ENCODE measurements at regions of chr9 and their contacts with region 1.

Region 1: DNA sequence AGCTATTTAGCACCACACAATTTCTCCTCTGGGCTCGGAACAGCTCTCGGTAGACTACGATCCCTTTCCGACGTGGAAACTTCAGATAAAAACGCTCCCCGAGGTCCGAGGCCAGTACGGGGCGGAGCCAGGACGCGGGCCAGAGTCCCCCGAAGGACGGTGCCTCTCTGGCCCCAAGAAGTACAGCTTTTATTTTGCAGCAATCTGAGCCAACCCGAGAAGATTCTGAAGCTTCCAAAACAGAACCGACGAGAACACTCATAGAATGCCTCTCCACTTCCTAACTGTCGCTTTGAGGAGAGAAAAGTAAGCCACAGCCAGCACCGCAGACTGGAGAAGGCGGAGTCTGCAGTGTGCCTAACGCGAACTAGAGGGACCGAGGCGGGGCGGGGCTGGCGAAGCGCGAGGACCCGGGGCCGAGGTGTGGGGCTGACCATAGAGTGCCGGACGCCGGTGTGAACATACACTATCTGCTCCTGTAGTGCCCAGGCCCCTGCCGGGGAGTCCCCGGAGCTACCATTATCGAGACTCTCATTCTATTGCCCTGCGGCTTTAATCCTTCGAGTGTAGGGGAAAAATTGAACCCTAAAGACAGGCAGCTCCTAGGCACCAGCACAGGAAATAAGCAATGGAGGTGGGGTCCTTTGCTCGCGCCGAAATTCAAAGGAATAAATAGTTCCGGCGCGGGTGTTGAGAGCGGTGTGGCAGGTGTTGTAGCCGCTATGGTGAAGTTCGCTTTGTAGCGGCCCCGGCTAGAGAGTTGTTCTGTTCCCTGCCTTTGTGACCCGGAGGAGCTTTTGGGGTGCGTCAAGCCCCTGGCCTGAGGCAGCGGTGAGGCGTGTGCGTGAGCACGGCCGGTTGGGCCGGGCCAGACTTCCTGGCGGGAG is at the start of gene SMC2:
- DNase-seq: peak; percentile 96
- ATAC-seq: peak; percentile 91
- H3K4me3 Mint-ChIP-seq: peak within 1 kb of the TSS; percentile 88
- H3K27ac Mint-ChIP-seq: peak within 1 kb of the TSS; percentile 99
- H3K4me1 Mint-ChIP-seq: peaks cover 37% of the 10 kb centered on the region
- H3K27me3 Mint-ChIP-seq: no peaks in the 10 kb centered on the region
- total RNA-seq, gene SMC2: 78.4 to 84.5 TPM

Region 2: GRCh38 chr9:102875674-102876073 is 1218.2 kb before region 1 on chr9:
- CTCF ChIA-PET with region 1: no interaction called
- POLR2A ChIA-PET with region 1: no interaction called
- intact Hi-C with region 1: no loop called
- DNase-seq: no peak
- ATAC-seq: no peak
- H3K4me3 Mint-ChIP-seq: no peak overlapping the region
- H3K27ac Mint-ChIP-seq: no peak overlapping the region
- H3K4me1 Mint-ChIP-seq: no peaks in the 10 kb centered on the region
- H3K27me3 Mint-ChIP-seq: no peaks in the 10 kb centered on the region

Region 3: DNA sequence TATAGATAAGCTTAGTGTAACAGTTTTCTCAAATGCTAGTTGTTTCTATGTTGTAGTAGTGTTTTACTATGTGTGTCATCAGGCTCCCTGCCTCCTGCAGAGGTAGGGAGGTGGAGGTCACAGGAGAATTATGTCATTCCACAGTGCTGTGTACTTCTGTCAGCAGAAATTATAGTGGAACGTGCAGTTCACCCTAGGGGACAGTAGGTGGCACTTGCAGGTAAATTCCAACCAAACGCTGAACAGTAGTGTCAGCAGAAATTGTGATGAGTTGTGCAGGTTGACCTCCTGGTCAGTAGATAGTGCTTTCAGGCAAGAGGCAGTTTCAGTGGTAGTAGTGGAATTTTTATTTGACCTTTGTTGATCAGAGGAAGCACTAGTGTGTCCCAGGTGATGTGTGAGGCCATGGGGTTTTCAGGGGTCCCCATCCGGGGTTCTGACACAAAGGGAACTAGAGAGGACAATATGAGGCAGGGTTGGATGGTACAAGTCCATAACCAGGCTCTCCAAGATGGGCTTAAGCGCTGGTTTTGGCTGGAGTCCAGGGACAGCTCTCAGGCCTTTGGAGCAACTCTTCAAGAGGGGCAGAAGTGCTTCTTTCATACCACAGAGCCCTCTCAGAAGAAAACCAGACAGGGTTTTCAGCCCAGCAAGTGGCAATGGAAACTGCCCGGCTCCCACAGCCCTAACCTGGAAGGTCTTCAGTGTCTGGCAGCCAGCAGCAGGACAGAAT is 695.9 kb before region 1 on chr9:
- CTCF ChIA-PET with region 1: no interaction called
- POLR2A ChIA-PET with region 1: no interaction called
- intact Hi-C with region 1: loop called in 1 of 2 experiments (anchors 5 kb)
- DNase-seq: peak; percentile 48
- ATAC-seq: peak; percentile 69
- H3K4me3 Mint-ChIP-seq: no peak overlapping the region
- H3K27ac Mint-ChIP-seq: no peak overlapping the region
- H3K4me1 Mint-ChIP-seq: no peaks in the 10 kb centered on the region
- H3K27me3 Mint-ChIP-seq: no peaks in the 10 kb centered on the region

Region 4: GRCh38 chr9:103798620-103799019 is 295.3 kb before region 1 on chr9:
- CTCF ChIA-PET with region 1: no interaction called
- POLR2A ChIA-PET with region 1: no interaction called
- intact Hi-C with region 1: loop called (anchors 2 to 5 kb)
- DNase-seq: peak; percentile 14
- ATAC-seq: peak; percentile 98
- H3K4me3 Mint-ChIP-seq: no peak overlapping the region
- H3K27ac Mint-ChIP-seq: no peak overlapping the region
- H3K4me1 Mint-ChIP-seq: peaks cover 7% of the 10 kb centered on the region
- H3K27me3 Mint-ChIP-seq: peaks cover 4% of the 10 kb centered on the region

Region 5: GRCh38 chr9:104118916-104119315 is 25.0 kb after region 1 on chr9:
- CTCF ChIA-PET with region 1: no interaction called
- POLR2A ChIA-PET with region 1: no interaction called
- intact Hi-C with region 1: loop called in 1 of 2 experiments (anchors 2 kb)
- DNase-seq: no peak
- ATAC-seq: no peak
- H3K4me3 Mint-ChIP-seq: no peak overlapping the region
- H3K27ac Mint-ChIP-seq: no peak overlapping the region
- H3K4me1 Mint-ChIP-seq: no peaks in the 10 kb centered on the region
- H3K27me3 Mint-ChIP-seq: no peaks in the 10 kb centered on the region

Region 6: GRCh38 chr9:104968025-104968982 is 874.4 kb after region 1 on chr9:
- CTCF ChIA-PET with region 1: no interaction called
- POLR2A ChIA-PET with region 1: no interaction called
- intact Hi-C with region 1: loop called in 1 of 2 experiments (anchors 10 kb)
- DNase-seq: peak; percentile 94
- ATAC-seq: peak; percentile 99
- H3K4me3 Mint-ChIP-seq: peak overlapping the region; percentile 86
- H3K27ac Mint-ChIP-seq: peak overlapping the region; percentile 92
- H3K4me1 Mint-ChIP-seq: peaks cover 13% of the 10 kb centered on the region
- H3K27me3 Mint-ChIP-seq: peaks cover 9% of the 10 kb centered on the region

Region 7: DNA sequence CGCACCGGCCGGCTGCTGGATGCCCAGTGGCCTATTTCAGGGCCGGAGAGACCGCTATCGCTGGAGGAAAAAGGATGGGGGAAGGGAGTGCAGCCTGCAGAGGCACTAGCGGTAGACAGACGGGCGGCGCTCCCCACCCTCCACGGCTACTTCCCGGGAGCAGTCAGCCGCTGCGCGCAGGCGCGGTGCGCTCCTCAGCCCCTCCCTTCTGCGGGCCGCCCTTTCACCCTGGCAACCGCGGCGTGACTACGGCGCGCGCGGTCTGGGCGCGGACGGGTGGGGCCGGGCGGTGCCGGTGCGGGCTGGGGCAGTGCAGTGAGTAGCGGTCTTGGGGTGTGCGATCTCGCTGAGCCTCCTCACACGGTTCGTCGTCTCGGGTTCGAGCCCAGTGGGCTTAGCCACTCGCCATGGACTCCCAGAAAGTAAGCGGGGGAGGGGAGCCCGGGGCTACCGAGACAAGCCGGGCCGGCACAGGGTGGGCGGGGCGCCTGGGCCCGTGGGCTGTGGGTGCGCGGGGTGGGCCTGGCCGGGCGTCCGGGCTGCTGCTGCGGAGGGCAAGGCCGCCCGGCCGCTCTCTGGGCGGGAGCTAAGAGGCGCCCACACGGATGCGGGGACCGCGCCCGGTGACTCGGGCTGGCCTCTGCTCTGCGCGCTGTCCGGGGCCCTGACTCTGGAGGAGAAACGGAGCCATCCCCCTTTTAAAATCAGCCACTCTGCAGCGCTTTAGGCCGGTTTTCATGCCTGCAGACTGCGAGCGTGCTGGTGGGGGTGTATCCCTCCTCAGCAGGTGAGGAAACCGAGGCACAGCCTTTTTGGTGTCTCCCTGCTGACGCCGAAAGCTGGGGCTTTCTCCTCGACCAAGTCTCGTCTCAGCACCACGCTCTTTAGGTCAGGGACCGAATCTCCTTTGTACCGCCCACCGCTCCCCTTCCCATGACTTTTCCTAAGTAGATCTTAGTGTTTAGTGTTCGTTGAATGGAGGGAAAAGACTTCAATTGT is 1354.2 kb after region 1 on chr9 and contains the start of gene FSD1L:
- CTCF ChIA-PET with region 1: no interaction called
- POLR2A ChIA-PET with region 1: no interaction called
- intact Hi-C with region 1: loop called in 1 of 2 experiments (anchors 5 kb)
- DNase-seq: peak; percentile 91
- ATAC-seq: peak; percentile 96
- H3K4me3 Mint-ChIP-seq: peak within 1 kb of the TSS; percentile 78
- H3K27ac Mint-ChIP-seq: peak within 1 kb of the TSS; percentile 44
- H3K4me1 Mint-ChIP-seq: peaks cover 9% of the 10 kb centered on the region
- H3K27me3 Mint-ChIP-seq: no peaks in the 10 kb centered on the region
- total RNA-seq, gene FSD1L: 2.4 to 3.0 TPM

Measured in activated CD4-positive, alpha-beta T cell treated with anti-CD3 and anti-CD28 coated beads for 36 hours (primary cell).